ENCODE measurements at regions of chr11 and their contacts with region 1.

Region 1: DNA sequence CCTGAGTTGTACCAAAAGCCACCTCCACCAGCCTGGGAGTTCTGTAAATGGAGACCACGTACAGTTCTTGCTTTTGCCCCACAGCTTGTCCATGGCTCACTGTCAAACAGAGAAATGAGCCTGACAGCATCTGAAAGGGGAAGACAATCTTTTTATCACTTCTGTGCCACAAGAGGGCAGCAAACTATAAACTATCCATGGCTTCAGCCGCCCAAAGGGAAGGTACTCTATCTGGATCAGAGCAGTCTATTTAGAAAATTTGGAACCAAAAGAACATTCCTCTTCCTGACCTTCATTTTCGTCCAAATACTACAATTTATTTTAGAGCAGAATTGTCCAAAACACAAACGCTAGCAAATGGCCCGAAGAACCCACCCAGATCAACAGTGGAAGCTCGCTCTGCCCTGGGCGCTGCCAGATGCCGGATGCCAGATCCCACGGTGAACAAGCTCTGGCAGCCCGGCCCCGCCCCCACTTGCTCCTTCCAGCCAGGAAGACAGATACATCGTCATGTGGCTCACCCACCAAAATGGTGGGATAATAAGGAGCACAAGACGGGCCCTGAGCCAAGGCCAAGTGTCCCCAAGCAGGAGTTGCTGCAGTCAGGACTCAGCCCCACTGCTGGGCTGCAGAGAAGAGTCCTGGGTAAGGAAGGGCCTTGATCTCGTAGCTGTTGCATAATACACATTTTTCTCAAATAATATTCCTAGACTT is 23.9 kb upstream of the SCGB1A1 start:
- DNase-seq: peak; percentile 75 to 80
- H3K4me3 ChIP-seq: peak overlapping the region; percentile 17 to 62 (median 42)
- H3K27ac ChIP-seq: peak overlapping the region; percentile 68 to 69
- H3K4me1 ChIP-seq: peaks cover 8 to 14% of the 10 kb centered on the region in 2 donors
- H3K27me3 ChIP-seq: no peaks in the 10 kb centered on the region
- CTCF ChIP-seq: peak; percentile 58 to 84 (median 70)
- POLR2A ChIP-seq: no peak

Region 2: DNA sequence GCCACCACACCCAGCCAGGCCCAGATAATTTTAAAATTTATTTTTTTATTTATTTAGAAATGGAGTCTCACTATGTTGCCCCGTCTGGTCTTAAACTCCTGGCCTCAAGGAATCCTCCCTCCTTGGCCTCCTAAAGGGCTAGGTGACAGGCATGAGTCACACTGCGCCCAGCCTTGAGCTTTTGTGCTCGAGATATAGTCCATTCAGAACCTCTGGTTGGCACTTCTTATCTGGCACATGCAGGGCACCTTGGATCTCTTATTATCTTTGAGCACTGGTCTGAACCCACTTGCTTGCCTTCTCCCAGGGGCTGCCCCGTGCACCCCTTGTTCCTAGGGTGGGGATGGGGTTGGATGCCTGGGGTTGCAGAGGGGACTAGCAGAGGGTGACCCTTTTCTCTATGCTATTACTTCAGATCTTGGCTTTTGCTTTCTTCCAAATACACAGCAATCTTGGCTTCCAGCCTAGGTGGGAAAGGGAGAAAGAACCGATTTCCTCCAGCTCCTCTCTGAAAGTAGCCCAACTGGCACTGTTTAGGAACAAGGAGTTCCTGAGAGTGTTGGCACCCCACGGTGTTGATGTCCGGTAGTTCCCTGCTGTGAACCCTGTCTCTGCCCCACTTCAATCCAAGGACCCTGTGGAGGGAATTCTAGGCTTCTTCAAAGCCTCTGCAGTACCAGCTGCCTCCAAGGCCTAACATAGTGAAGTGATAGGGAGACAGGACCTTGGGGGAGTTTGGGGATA is 484.4 kb after region 1 on chr11:
- intact Hi-C with region 1: loop called (anchors 10 kb)
- DNase-seq: peak in 1 of 2 donors; percentile 82
- H3K4me3 ChIP-seq: peak overlapping the region; percentile 68 to 99 (median 92)
- H3K27ac ChIP-seq: peak overlapping the region; percentile 97 to 100
- H3K4me1 ChIP-seq: peaks cover 0 to 17% of the 10 kb centered on the region in 2 donors
- H3K27me3 ChIP-seq: no peaks in the 10 kb centered on the region
- CTCF ChIP-seq: no peak
- POLR2A ChIP-seq: no peak

Measured in breast epithelium (tissue), 4 donors.